Activated CD4-positive, alpha-beta T cell treated with anti-CD3 and anti-CD28 coated beads for 36 hours (primary cell): ENCODE measurements at regions of chr9 and their contacts with region 1.

Region 1: DNA sequence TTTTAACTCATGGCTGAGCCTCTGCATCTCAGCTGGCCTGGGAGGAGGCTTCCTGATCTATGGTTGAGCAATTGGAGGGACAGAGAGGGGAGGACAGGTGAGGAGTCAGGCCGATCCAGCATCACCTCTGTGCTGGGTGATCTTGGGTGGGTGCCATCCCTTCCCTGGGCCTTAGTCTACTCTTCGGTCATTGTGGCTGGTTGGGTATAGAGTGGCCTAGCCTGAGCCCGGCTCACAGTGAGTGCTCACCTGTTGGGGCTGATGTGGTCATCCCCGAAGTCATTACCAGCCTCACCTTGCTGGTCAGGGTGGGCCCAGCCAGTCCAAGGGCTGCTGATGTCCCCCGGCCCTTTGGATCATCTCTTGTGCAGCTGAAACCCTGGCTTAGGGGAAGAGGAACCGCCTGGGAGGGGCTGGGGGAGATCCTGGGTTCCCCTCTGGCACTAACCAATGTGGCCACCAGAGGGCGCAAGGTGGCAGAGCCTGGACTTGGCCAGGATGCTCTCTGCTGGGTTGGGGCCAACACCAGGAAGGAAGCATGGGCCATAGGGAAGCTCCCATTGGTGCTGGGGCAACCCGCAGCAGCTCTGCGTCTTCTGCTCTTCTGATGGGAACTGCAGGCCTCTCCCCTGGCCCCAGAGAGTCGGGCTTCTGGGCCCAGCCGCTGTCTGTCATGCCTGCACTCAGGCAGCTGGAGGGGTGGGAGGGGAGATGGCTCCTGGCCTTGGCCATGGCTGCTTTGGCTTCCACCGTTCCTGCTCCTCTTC is 17.3 kb upstream of the ODF2 start:
- DNase-seq: peak; percentile 93
- ATAC-seq: peak; percentile 100
- H3K4me3 Mint-ChIP-seq: no peak overlapping the region
- H3K27ac Mint-ChIP-seq: no peak overlapping the region
- H3K4me1 Mint-ChIP-seq: peaks cover 2% of the 10 kb centered on the region
- H3K27me3 Mint-ChIP-seq: no peaks in the 10 kb centered on the region

Region 2: DNA sequence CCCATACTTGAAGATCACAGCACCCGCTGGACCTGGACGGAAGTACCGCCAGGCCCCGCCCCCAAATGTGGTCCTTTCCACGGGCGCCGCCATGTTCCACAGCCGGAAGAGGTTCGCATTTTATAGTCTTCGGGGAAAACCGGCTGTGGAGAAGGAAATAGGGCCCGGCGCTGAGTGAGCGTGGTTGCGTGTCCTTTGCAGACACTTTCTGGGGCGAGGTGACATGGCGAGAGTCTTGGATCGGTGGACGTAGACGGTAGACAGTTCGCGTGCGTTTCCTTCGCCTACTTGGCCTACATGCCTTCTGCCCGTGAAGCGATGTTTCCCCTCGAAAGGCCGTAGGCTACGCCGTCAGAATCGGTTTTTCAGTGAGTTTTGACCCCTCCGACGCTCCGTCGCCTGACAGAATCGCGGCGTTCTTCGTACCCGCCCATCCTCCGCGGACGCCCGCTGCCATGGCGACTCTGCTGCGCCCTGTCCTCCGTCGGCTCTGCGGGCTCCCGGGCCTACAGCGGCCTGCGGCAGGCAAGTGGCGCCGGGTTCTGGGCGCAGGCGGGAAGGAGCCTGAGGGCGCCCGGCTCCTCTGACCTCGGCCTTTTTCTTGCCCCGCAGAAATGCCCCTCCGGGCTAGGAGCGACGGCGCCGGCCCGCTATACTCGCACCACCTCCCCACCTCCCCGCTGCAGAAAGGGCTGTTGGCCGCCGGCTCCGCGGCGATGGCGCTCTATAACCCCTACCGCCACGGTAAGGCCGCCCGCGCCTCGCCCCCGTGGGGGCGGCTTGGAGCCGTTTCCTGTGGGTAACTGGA is 115.9 kb before region 1 on chr9 and contains the starts of genes COQ4 and TRUB2:
- CTCF ChIA-PET with region 1: no interaction called
- POLR2A ChIA-PET with region 1: no interaction called
- intact Hi-C with region 1: no loop called
- DNase-seq: peak; percentile 96
- ATAC-seq: peak; percentile 90
- H3K4me3 Mint-ChIP-seq: peak within 1 kb of the TSS; percentile 87
- H3K27ac Mint-ChIP-seq: peak within 1 kb of the TSS; percentile 93
- H3K4me1 Mint-ChIP-seq: peaks cover 19% of the 10 kb centered on the region
- H3K27me3 Mint-ChIP-seq: no peaks in the 10 kb centered on the region
- total RNA-seq, gene COQ4: 32.1 to 38.8 TPM
- total RNA-seq, gene TRUB2: 29.5 to 37.5 TPM

Region 3: GRCh38 chr9:128412120-128412790 is 26.3 kb before region 1 on chr9:
- CTCF ChIA-PET with region 1: interaction called, 10 read pairs
- POLR2A ChIA-PET with region 1: no interaction called
- intact Hi-C with region 1: no loop called
- DNase-seq: peak; percentile 78
- ATAC-seq: peak; percentile 53
- H3K4me3 Mint-ChIP-seq: no peak overlapping the region
- H3K27ac Mint-ChIP-seq: no peak overlapping the region
- H3K4me1 Mint-ChIP-seq: no peaks in the 10 kb centered on the region
- H3K27me3 Mint-ChIP-seq: peaks cover 49% of the 10 kb centered on the region

Region 4: DNA sequence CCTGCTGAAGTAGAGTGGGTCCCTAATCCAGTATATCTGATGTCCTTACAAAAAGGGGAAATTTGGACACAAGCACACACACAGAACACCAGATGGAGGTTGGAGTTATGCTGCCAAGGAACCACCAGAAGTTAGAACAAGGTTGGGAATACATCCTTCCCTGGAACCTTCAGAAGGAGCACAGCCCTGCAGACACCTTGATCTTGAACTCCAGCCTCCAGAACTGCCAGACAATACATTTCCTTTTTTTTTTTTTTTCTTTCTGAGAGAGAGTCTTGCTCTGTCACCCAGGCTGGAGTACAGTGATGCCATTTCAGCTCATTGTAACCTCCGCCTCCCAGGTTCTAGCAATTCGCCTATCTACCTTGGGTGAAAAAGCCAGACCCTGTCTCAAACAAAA is 10.2 kb after region 1 on chr9:
- CTCF ChIA-PET with region 1: interaction called, 17 read pairs
- POLR2A ChIA-PET with region 1: no interaction called
- intact Hi-C with region 1: no loop called
- DNase-seq: no peak
- ATAC-seq: no peak
- H3K4me3 Mint-ChIP-seq: no peak overlapping the region
- H3K27ac Mint-ChIP-seq: no peak overlapping the region
- H3K4me1 Mint-ChIP-seq: no peaks in the 10 kb centered on the region
- H3K27me3 Mint-ChIP-seq: no peaks in the 10 kb centered on the region